PC-3 (cell line): ENCODE measurements at regions of chr5 and their contacts with region 1.

Region 1: GRCh38 chr5:134845852-134846640 is at the start of gene C5orf24:
- DNase-seq: peak; percentile 93
- ATAC-seq: peak; percentile 88
- H3K4me3 ChIP-seq: peak within 1 kb of the TSS; percentile 98
- H3K27ac ChIP-seq: peak within 1 kb of the TSS; percentile 63
- H3K4me1 ChIP-seq: peaks cover 20% of the 10 kb centered on the region
- H3K27me3 ChIP-seq: no peaks in the 10 kb centered on the region
- CTCF ChIP-seq: no peak
- total RNA-seq, gene C5orf24: 16.5 and 18.2 TPM in 2 replicates

Region 2: GRCh38 chr5:134825212-134825611 is 20.8 kb before region 1 on chr5:
- CTCF ChIA-PET with region 1: no interaction called
- POLR2A ChIA-PET with region 1: interaction called, 11 read pairs
- intact Hi-C with region 1: no loop called
- DNase-seq: no peak
- ATAC-seq: no peak
- H3K4me3 ChIP-seq: no peak overlapping the region
- H3K27ac ChIP-seq: no peak overlapping the region
- H3K4me1 ChIP-seq: no peaks in the 10 kb centered on the region
- H3K27me3 ChIP-seq: no peaks in the 10 kb centered on the region
- CTCF ChIP-seq: no peak